ENCODE measurements at regions of chr4 and their contacts with region 1.

Region 1: DNA sequence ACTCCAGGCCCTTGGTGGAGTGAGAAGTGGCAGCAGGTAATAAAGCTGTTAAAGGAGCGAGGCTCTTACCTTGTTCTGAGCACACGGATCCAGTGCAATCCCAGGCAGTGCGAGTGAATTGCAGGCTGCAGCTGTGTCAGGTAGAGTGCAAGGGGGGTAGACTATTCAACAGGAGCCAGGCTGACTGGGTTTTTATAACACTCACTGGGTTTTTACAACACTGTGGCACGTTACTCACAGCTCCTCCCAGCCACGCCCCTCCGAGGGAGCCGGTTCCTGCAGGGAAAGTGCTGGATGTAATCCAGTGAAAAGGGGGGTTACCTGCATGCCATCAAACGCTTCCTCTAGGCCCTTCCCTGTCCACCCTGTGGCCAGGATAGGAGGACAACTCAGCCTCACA is 358 bp downstream of the FGFBP1 start:
- DNase-seq: peak; percentile 88
- ATAC-seq: peak; percentile 91
- H3K4me3 ChIP-seq: peak overlapping the region; percentile 71
- H3K27ac ChIP-seq: peak overlapping the region; percentile 72
- H3K4me1 ChIP-seq: peaks cover 37% of the 10 kb centered on the region
- H3K27me3 ChIP-seq: no peaks in the 10 kb centered on the region
- CTCF ChIP-seq: no peak

Region 2: GRCh38 chr4:15920723-15921591 is 17.2 kb before region 1 on chr4:
- CTCF ChIA-PET with region 1: no interaction called
- POLR2A ChIA-PET with region 1: no interaction called
- intact Hi-C with region 1: loop called (anchors 2 kb)
- DNase-seq: peak; percentile 93
- ATAC-seq: peak; percentile 92
- H3K4me3 ChIP-seq: peak overlapping the region; percentile 39; the same call in 1 of the 2 replicates
- H3K27ac ChIP-seq: peak overlapping the region; percentile 99
- H3K4me1 ChIP-seq: peaks cover 50% of the 10 kb centered on the region
- H3K27me3 ChIP-seq: no peaks in the 10 kb centered on the region
- CTCF ChIP-seq: no peak

Region 3: DNA sequence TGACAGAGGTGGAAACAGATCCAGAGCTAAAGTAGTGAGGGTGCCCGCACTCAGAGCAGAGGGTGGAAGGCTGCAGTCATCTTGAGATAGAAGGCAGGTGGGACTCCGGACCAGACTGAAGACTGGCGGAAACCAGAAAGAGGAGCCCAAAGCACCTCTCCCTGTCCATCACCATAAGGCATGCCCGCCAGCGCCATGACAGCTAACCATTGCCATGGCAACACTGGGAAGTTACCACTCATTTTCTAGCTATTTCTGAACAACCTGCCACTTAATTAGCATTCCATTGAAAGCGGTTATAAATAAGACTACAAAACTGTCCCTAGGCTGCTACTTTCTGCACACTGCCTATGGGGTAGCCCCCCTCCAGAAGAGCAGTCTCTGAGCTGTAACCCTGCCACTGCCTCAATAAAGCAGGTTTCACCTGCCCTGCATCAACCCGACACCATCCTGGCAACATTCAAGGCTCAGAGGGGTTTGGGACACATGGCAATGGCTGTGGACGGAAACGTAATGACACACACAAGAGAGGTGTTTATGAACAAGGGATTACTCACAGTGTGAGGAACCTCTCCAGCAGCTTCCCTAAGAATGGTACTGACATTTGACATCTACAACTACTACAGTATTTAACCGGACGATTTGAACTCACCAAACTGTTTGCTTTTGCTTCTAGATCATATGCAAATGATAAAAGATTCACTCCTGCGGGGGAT is 52.5 kb after region 1 on chr4:
- CTCF ChIA-PET with region 1: no interaction called
- POLR2A ChIA-PET with region 1: no interaction called
- intact Hi-C with region 1: no loop called
- DNase-seq: peak; percentile 19
- ATAC-seq: no peak
- H3K4me3 ChIP-seq: no peak overlapping the region
- H3K27ac ChIP-seq: no peak overlapping the region
- H3K4me1 ChIP-seq: no peaks in the 10 kb centered on the region
- H3K27me3 ChIP-seq: no peaks in the 10 kb centered on the region
- CTCF ChIP-seq: no peak